Naive thymus-derived CD4-positive, alpha-beta T cell (primary cell): ENCODE measurements at regions of chr12 and their contacts with region 1.

Region 1: DNA sequence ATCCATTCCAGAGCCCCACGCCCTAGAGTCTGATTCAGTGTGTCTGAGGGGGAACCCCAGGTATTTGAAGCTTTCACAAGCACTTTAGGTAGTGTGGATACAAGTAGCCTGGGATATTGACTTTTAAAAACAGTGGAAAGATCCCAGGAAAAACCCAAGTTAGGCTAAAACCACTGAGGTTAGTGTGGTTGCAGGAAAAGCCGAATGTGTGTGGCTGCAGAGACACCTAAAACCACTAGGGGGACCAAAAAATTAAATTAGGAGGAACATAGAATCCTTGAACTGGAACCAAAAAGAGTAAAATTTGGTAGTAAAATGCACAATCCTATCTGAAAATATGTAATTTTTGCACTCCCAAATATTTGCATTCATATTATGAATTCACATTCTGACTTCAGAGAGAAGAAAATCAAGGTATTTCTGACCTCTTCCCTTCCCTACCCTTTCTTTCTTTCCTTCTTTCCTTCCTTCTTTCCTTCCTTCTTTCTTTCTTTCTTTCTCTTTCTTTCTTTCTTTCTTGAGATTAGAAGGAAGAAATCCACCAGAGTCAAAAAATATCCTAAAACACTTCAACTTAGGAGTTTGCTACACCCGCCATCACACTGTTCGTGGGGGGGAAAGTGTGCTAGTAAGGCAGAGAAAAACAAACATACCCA is 37.8 kb downstream of the SLCO1A2 start:
- DNase-seq: peak in 4 of 9 donors; percentile 4 to 14 (median 8)
- ATAC-seq: peak; percentile 38
- H3K4me3 ChIP-seq: no peak overlapping the region
- H3K4me3 Mint-ChIP-seq: no peak overlapping the region
- H3K27ac ChIP-seq: no peak overlapping the region
- H3K27ac Mint-ChIP-seq: no peak overlapping the region
- H3K4me1 ChIP-seq: no peaks in the 10 kb centered on the region
- H3K4me1 Mint-ChIP-seq: peaks cover 0 to 4% (median 0%) of the 10 kb centered on the region in 7 donors
- H3K27me3 ChIP-seq: no peaks in the 10 kb centered on the region
- H3K27me3 Mint-ChIP-seq: peaks cover 4 to 13% (median 6%) of the 10 kb centered on the region in 5 donors

Region 2: DNA sequence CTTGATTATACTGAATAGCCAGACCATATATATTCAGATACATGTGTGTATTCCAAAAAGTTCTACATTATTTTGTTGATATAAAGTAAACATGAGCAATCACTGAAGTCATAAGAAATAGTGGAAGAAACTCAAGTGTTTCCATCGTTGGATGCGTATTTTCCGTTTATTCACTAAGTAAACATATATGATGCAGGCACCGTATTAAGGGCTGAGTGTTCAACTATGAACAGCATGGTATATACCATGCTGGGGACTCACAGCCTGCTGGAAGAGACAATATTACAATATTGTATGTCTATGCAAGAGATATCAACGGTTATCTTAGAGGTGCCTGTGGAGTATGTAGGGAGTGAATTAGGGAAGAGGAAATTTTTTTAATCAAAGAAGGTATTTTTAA is 141.8 kb after region 1 on chr12:
- CTCF ChIA-PET with region 1: no interaction called
- POLR2A ChIA-PET with region 1: no interaction called
- intact Hi-C with region 1: loop called (anchors 1 to 5 kb)
- DNase-seq: no peak
- ATAC-seq: no peak
- H3K4me3 ChIP-seq: peak overlapping the region; percentile 91
- H3K4me3 Mint-ChIP-seq: peak overlapping the region; percentile 94 to 99 (median 98)
- H3K27ac ChIP-seq: peak overlapping the region; percentile 81
- H3K27ac Mint-ChIP-seq: peak overlapping the region; percentile 92 to 99 (median 97)
- H3K4me1 ChIP-seq: peaks cover 11 to 22% of the 10 kb centered on the region in 2 donors
- H3K4me1 Mint-ChIP-seq: peaks cover 32 to 72% (median 49%) of the 10 kb centered on the region in 7 donors
- H3K27me3 ChIP-seq: no peaks in the 10 kb centered on the region
- H3K27me3 Mint-ChIP-seq: peaks cover 0 to 10% (median 0%) of the 10 kb centered on the region in 5 donors

Region 3: GRCh38 chr12:21451529-21451928 is 154.7 kb after region 1 on chr12:
- CTCF ChIA-PET with region 1: no interaction called
- POLR2A ChIA-PET with region 1: no interaction called
- intact Hi-C with region 1: loop called in 1 of 2 experiments (anchors 2 kb)
- DNase-seq: no peak
- ATAC-seq: no peak
- H3K4me3 ChIP-seq: no peak overlapping the region
- H3K4me3 Mint-ChIP-seq: no peak overlapping the region
- H3K27ac ChIP-seq: no peak overlapping the region
- H3K27ac Mint-ChIP-seq: peak overlapping the region in 4 of 9 donors; percentile 6 to 51 (median 28)
- H3K4me1 ChIP-seq: peaks cover 2 to 21% of the 10 kb centered on the region in 2 donors
- H3K4me1 Mint-ChIP-seq: peaks cover 2 to 48% (median 29%) of the 10 kb centered on the region in 7 donors
- H3K27me3 ChIP-seq: no peaks in the 10 kb centered on the region
- H3K27me3 Mint-ChIP-seq: no peaks in the 10 kb centered on the region

Region 4: DNA sequence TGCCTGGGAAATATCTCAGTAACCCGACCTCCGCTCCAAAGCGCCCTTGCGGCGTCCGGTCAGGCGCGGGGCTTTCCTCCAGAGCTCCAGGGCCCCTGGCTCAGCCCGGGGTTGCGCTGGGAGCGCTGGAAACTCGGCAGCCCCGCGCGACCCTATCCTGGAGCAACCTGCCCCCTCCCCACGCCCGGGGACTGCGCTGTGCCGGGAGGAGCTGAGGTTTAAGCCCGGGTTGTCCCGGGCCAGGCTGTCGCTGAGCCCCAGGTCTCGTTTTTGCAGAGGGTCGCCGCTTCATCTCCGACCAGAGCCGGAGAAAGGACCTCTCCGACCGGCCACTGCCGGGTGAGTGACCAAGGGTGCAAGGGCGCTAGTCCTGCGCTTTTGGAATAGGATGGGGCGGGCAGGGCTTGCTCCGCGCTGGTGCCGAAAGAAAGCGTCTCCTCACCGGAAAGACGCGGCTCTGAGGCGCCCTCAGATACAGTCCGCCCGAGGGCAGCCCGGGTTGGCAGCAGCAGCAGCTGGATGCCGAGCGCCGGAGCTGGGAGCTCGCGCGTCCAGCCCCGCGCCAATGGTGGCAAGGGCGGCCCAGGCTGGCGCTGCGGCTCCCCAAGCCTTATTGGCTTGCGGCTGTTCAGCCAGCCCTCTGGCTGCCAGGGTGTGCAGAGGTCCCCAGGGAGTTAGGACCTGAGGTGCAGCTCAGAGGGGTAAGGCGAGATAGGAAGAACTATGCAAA is 230.7 kb after region 1 on chr12:
- CTCF ChIA-PET with region 1: no interaction called
- POLR2A ChIA-PET with region 1: no interaction called
- intact Hi-C with region 1: loop called in 1 of 2 experiments (anchors 5 kb)
- DNase-seq: peak; percentile 33 to 69 (median 61)
- ATAC-seq: peak; percentile 95
- H3K4me3 ChIP-seq: peak overlapping the region; percentile 63
- H3K4me3 Mint-ChIP-seq: peak overlapping the region; percentile 69 to 87 (median 80)
- H3K27ac ChIP-seq: no peak overlapping the region
- H3K27ac Mint-ChIP-seq: no peak overlapping the region
- H3K4me1 ChIP-seq: peaks cover 0 to 3% of the 10 kb centered on the region in 2 donors
- H3K4me1 Mint-ChIP-seq: peaks cover 0 to 13% (median 8%) of the 10 kb centered on the region in 7 donors
- H3K27me3 ChIP-seq: no peaks in the 10 kb centered on the region
- H3K27me3 Mint-ChIP-seq: peaks cover 18 to 54% (median 37%) of the 10 kb centered on the region in 5 donors

Region 5: DNA sequence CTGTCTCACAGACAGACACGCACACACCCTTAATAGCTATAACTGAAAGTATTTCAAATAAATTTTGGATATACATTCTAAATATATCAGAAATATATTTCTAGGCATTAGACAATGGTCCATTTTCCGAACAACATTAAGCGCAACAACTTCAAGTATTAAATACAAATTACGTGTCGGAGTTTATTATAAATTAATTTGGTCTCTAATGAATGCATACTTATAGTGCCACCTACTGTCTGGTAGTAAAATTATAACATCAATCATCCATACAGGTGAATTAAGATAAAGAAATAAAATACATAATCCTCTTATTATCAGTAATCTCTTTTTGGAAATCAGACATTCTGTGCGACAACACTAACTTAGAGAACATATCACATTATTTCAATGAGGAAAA is 722.0 kb after region 1 on chr12:
- CTCF ChIA-PET with region 1: interaction called, 6 read pairs
- POLR2A ChIA-PET with region 1: no interaction called
- intact Hi-C with region 1: loop called in 1 of 2 experiments (anchors 2 kb)
- DNase-seq: peak in 5 of 9 donors; percentile 6 to 25 (median 13)
- ATAC-seq: no peak
- H3K4me3 ChIP-seq: no peak overlapping the region
- H3K4me3 Mint-ChIP-seq: no peak overlapping the region
- H3K27ac ChIP-seq: no peak overlapping the region
- H3K27ac Mint-ChIP-seq: no peak overlapping the region
- H3K4me1 ChIP-seq: no peaks in the 10 kb centered on the region
- H3K4me1 Mint-ChIP-seq: no peaks in the 10 kb centered on the region
- H3K27me3 ChIP-seq: no peaks in the 10 kb centered on the region
- H3K27me3 Mint-ChIP-seq: peaks cover 0 to 17% (median 3%) of the 10 kb centered on the region in 5 donors

Region 6: DNA sequence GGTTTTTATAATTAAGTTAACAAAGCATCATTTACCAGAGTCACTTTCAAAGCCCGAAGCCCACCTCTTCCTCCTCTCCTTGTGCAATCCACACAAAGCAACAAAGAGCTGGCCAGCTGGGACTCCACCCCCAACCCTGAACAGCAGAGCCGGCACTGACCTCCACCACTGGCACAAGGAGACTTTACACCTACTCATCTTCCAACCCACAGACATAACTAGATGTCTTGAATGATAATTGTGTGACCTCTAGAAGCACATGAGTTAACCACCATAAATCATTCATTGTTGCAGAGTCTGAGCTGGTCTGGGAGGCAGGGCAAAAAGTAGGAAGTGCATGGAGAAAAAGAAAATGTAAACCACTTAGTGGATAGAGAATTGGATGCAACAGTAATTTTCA is 965.4 kb after region 1 on chr12:
- CTCF ChIA-PET with region 1: no interaction called
- POLR2A ChIA-PET with region 1: no interaction called
- intact Hi-C with region 1: no loop called
- DNase-seq: no peak
- ATAC-seq: no peak
- H3K4me3 ChIP-seq: no peak overlapping the region
- H3K4me3 Mint-ChIP-seq: no peak overlapping the region
- H3K27ac ChIP-seq: no peak overlapping the region
- H3K27ac Mint-ChIP-seq: no peak overlapping the region
- H3K4me1 ChIP-seq: no peaks in the 10 kb centered on the region
- H3K4me1 Mint-ChIP-seq: no peaks in the 10 kb centered on the region
- H3K27me3 ChIP-seq: no peaks in the 10 kb centered on the region
- H3K27me3 Mint-ChIP-seq: peaks cover 0 to 2% (median 0%) of the 10 kb centered on the region in 5 donors